ENCODE measurements at regions of chr7 and their contacts with region 1.

Region 1: GRCh38 chr7:156764016-156764669 is 123.6 kb downstream of the RNF32 start:
- DNase-seq: no peak
- H3K4me3 Mint-ChIP-seq: no peak overlapping the region
- H3K27ac Mint-ChIP-seq: no peak overlapping the region
- H3K4me1 Mint-ChIP-seq: peaks cover 15% of the 10 kb centered on the region
- H3K27me3 Mint-ChIP-seq: no peaks in the 10 kb centered on the region

Region 2: GRCh38 chr7:156751319-156751718 is 12.8 kb before region 1 on chr7:
- intact Hi-C with region 1: loop called (anchors 2 kb)
- DNase-seq: peak; percentile 62
- H3K4me3 Mint-ChIP-seq: peak overlapping the region; percentile 24
- H3K27ac Mint-ChIP-seq: no peak overlapping the region
- H3K4me1 Mint-ChIP-seq: peaks cover 27% of the 10 kb centered on the region
- H3K27me3 Mint-ChIP-seq: no peaks in the 10 kb centered on the region

Region 3: GRCh38 chr7:156802214-156802613 is 38.1 kb after region 1 on chr7:
- intact Hi-C with region 1: loop called (anchors 2 kb)
- DNase-seq: no peak
- H3K4me3 Mint-ChIP-seq: no peak overlapping the region
- H3K27ac Mint-ChIP-seq: no peak overlapping the region
- H3K4me1 Mint-ChIP-seq: peaks cover 9% of the 10 kb centered on the region
- H3K27me3 Mint-ChIP-seq: no peaks in the 10 kb centered on the region

Region 4: DNA sequence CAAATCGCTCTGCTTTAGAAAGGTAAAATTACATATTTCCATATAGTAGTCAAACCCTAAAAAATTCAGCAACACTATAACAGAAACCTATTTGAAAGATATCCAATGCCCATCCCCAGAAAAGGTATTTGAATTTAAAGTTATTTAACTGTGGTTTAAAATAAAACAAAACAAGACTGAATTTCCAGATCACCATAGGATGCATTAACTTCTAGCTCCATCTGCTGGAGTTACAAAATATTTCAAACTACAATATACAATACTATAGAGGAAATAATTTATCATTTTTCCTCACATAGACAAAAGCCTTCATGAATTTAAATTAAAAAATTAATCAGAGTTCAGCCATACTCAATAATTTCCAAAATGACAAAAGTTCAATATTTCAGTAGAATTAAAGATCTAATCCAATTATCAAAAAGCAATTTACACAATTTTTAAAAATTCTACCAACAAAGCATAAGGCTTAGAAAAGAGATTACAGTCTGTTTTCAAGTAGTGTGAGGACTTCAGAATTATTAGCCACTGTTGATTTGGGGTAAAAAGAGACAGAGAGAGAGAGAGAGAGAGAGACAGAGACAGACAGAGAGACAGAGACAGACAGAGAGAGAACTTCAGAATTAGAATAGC is 52.9 kb after region 1 on chr7:
- intact Hi-C with region 1: no loop called
- DNase-seq: no peak
- H3K4me3 Mint-ChIP-seq: no peak overlapping the region
- H3K27ac Mint-ChIP-seq: no peak overlapping the region
- H3K4me1 Mint-ChIP-seq: peaks cover 14% of the 10 kb centered on the region
- H3K27me3 Mint-ChIP-seq: no peaks in the 10 kb centered on the region

Measured in activated T-helper 2 cell treated with anti-CD3 and anti-CD28 coated beads, Interferon-gamma antibody, Interleukin-2, Interleukin-4, amounts not matched to agents 10 μg/mL and 5 μg/mL and 100 μg/mL, durations not matched to agents 14 hours and 24 hours and 36 hours (primary cell).